ENCODE measurements at regions of chr10 and their contacts with region 1.

Region 1: GRCh38 chr10:104223304-104223703 is 8.9 kb downstream of the CFAP43 start:
- DNase-seq: no peak

Region 2: GRCh38 chr10:104034401-104035193 is 188.7 kb before region 1 on chr10:
- intact Hi-C with region 1: no loop called
- DNase-seq: no peak

Region 3: GRCh38 chr10:104146882-104147281 is 76.4 kb before region 1 on chr10:
- intact Hi-C with region 1: loop called in 1 of 2 experiments (anchors 2 kb)
- DNase-seq: no peak

Region 4: GRCh38 chr10:104277785-104278184 is 54.5 kb after region 1 on chr10:
- intact Hi-C with region 1: no loop called
- DNase-seq: no peak